Dendritic cell treated with granulocyte-macrophage colony-stimulating factor and Interleukin-4, amounts not matched to agents 40 ng/mL and 50 ng/mL, for 4 days (primary cell): ENCODE measurements at regions of chr21 and their contacts with region 1.

Region 1: GRCh38 chr21:28745131-28746016 is 247.3 kb downstream of the LTN1 start:
- H3K4me3 Mint-ChIP-seq: no peak overlapping the region
- H3K27ac Mint-ChIP-seq: no peak overlapping the region
- H3K4me1 Mint-ChIP-seq: no peaks in the 10 kb centered on the region
- H3K27me3 Mint-ChIP-seq: no peaks in the 10 kb centered on the region

Region 2: GRCh38 chr21:26850108-26850643 is 1895.2 kb before region 1 on chr21:
- intact Hi-C with region 1: loop called (anchors 1 kb)
- H3K4me3 Mint-ChIP-seq: no peak overlapping the region
- H3K27ac Mint-ChIP-seq: no peak overlapping the region
- H3K4me1 Mint-ChIP-seq: peaks cover 22% of the 10 kb centered on the region
- H3K27me3 Mint-ChIP-seq: peaks cover 32% of the 10 kb centered on the region

Region 3: GRCh38 chr21:28069450-28069923 is 675.9 kb before region 1 on chr21:
- intact Hi-C with region 1: loop called (anchors 10 kb)
- H3K4me3 Mint-ChIP-seq: no peak overlapping the region
- H3K27ac Mint-ChIP-seq: no peak overlapping the region
- H3K4me1 Mint-ChIP-seq: peaks cover 9% of the 10 kb centered on the region
- H3K27me3 Mint-ChIP-seq: no peaks in the 10 kb centered on the region

Region 4: GRCh38 chr21:28480470-28480869 is 264.9 kb before region 1 on chr21:
- intact Hi-C with region 1: no loop called
- H3K4me3 Mint-ChIP-seq: no peak overlapping the region
- H3K27ac Mint-ChIP-seq: no peak overlapping the region
- H3K4me1 Mint-ChIP-seq: no peaks in the 10 kb centered on the region
- H3K27me3 Mint-ChIP-seq: no peaks in the 10 kb centered on the region

Region 5: GRCh38 chr21:28516991-28517592 is 228.3 kb before region 1 on chr21:
- intact Hi-C with region 1: loop called (anchors 1 kb)
- H3K4me3 Mint-ChIP-seq: no peak overlapping the region
- H3K27ac Mint-ChIP-seq: no peak overlapping the region
- H3K4me1 Mint-ChIP-seq: no peaks in the 10 kb centered on the region
- H3K27me3 Mint-ChIP-seq: no peaks in the 10 kb centered on the region

Region 6: GRCh38 chr21:28781602-28782276 is 36.4 kb after region 1 on chr21:
- intact Hi-C with region 1: no loop called
- H3K4me3 Mint-ChIP-seq: no peak overlapping the region
- H3K27ac Mint-ChIP-seq: no peak overlapping the region
- H3K4me1 Mint-ChIP-seq: no peaks in the 10 kb centered on the region
- H3K27me3 Mint-ChIP-seq: no peaks in the 10 kb centered on the region